ENCODE measurements at regions of chr16 and their contacts with region 1.

Region 1: GRCh38 chr16:58129097-58129936 is at the start of gene CFAP20:
- DNase-seq: peak; percentile 99
- H3K4me3 Mint-ChIP-seq: peak within 1 kb of the TSS; percentile 80
- H3K27ac Mint-ChIP-seq: peak within 1 kb of the TSS; percentile 73
- H3K4me1 Mint-ChIP-seq: peaks cover 33% of the 10 kb centered on the region
- H3K27me3 Mint-ChIP-seq: no peaks in the 10 kb centered on the region
- total RNA-seq, gene CFAP20: 62.7 and 63.2 TPM in 2 replicates

Region 2: DNA sequence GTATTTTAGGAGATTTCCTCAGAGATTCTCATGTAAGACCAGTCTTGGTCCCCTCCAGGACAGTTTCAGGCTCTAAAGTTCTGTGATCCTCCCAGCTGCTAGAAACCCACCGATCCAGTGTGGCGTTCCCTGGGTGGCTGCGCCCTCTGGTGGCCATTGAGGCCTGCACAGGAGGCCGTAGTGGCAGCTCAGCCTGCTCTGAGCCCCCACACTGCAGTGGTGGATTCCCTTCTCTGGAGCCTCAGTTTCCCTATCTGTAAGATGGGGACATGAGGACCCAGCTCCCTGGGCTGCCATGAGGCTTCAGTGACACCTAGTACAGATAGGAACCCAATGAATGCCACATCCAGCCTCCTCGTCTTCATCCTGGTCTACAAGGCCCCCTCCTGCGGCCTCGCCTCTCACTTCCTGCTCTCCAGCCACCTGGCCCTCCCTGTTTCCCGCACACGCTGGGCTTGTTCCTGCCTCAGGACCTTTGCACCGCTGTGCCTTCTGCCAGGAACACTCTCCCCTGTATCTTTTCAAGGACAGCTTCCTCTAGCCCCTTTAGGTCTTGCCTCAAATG is 609.4 kb before region 1 on chr16:
- intact Hi-C with region 1: no loop called
- DNase-seq: peak; percentile 94
- H3K4me3 Mint-ChIP-seq: no peak overlapping the region
- H3K27ac Mint-ChIP-seq: no peak overlapping the region
- H3K4me1 Mint-ChIP-seq: peaks cover 7% of the 10 kb centered on the region
- H3K27me3 Mint-ChIP-seq: no peaks in the 10 kb centered on the region

Region 3: DNA sequence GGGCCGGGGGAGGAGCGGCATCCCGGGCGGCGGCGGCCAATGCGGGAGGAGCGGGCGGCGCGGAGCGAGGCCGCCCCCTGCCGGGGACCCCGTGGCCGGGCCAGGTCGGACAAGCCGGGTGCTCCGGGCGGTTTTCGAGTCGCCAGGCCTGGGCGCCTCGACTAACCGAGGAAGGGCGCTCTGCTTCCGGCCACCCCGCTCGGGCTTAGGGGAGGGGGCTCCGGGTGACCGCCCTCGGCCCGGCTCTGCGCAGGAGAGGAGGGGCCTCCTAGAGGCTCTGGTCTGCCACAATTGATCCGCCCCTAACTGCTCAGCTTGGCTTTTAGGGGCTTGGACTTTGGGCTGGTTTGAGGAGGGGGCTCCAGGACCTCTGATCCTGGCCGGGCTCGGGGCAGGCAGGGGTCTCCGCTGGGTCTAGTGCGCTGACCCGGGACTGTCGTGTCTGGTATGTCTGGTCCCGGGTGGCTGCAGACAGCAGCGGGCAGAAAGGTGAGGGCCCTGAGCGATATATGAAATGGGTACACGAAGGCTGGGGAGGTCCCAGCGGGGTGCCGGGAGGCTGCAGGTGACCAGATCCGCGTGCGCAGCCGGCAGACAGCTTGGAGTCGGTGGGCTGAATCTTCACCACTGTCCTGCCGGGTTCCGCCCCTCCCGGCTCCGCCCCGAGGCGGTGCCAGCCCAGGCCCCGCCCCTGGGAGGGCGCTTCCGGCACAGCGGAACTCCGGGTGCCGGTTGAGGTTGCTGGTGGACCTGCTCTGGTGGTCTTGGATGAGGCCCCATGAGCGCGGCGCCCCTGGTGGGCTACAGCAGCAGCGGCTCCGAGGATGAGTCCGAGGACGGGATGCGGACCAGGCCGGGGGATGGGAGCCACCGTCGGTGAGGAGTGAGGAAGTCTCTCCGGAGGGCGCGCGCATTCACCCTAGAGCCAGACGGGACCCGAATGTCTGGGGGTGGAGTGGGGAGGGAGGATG is 128.3 kb before region 1 on chr16 and contains the start of gene USB1:
- intact Hi-C with region 1: loop called (anchors 2 kb)
- DNase-seq: peak; percentile 97
- H3K4me3 Mint-ChIP-seq: peak within 1 kb of the TSS; percentile 96
- H3K27ac Mint-ChIP-seq: peak within 1 kb of the TSS; percentile 89
- H3K4me1 Mint-ChIP-seq: peaks cover 34% of the 10 kb centered on the region
- H3K27me3 Mint-ChIP-seq: no peaks in the 10 kb centered on the region
- total RNA-seq, gene USB1: 50.9 and 54.4 TPM in 2 replicates

Region 4: GRCh38 chr16:58025351-58026138 is 103.8 kb before region 1 on chr16 and contains the start of gene MMP15:
- intact Hi-C with region 1: loop called (anchors 1 kb)
- DNase-seq: peak; percentile 89
- H3K4me3 Mint-ChIP-seq: peak within 1 kb of the TSS; percentile 88
- H3K27ac Mint-ChIP-seq: peak within 1 kb of the TSS; percentile 70
- H3K4me1 Mint-ChIP-seq: peaks cover 12% of the 10 kb centered on the region
- H3K27me3 Mint-ChIP-seq: peaks cover 26% of the 10 kb centered on the region
- total RNA-seq, gene MMP15: 0.89 and 1.1 TPM in 2 replicates

Region 5: GRCh38 chr16:58198022-58198683 is 68.8 kb after region 1 on chr16 and contains the start of gene CSNK2A2:
- intact Hi-C with region 1: loop called (anchors 1 kb)
- DNase-seq: peak; percentile 91
- H3K4me3 Mint-ChIP-seq: peak within 1 kb of the TSS; percentile 95
- H3K27ac Mint-ChIP-seq: peak within 1 kb of the TSS; percentile 88
- H3K4me1 Mint-ChIP-seq: peaks cover 34% of the 10 kb centered on the region
- H3K27me3 Mint-ChIP-seq: peaks cover 28% of the 10 kb centered on the region
- total RNA-seq, gene CSNK2A2: 92.0 and 96.7 TPM in 2 replicates

Region 6: DNA sequence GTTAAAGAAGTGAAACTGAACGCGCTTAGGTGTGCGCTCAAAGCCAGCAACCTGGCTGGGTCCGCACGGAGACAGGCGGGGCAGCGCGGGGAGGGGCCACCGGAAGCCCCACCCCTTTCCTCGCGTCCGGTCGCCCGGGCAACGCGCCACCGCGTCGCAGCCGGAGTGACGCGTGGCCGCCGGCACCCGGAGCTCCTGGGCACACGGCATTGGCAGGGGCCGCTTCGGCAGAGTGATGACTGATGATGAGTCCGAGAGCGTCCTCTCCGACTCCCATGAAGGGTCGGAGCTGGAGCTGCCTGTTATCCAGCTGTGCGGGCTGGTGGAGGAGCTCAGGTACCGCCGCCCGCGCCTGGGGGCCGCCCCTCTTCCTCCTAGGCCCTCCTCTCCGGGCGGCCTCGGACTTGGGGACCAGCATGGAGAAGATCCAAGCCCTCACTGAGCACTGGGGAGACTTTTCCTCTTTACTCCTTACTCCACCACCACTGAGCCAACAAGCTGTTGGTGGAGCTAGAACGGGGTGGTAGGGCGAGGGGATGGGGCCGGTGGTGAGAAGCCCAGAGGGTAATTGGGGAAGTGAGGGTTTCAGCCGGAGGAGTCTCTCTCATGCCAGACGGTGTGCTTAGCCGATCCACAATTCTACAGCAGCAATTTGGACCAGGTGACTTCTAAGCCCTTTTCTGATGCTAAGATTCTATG is 120.6 kb after region 1 on chr16:
- intact Hi-C with region 1: loop called (anchors 5 kb)
- DNase-seq: peak; percentile 96
- H3K4me3 Mint-ChIP-seq: peak overlapping the region; percentile 90
- H3K27ac Mint-ChIP-seq: peak overlapping the region; percentile 80
- H3K4me1 Mint-ChIP-seq: peaks cover 8% of the 10 kb centered on the region
- H3K27me3 Mint-ChIP-seq: peaks cover 13% of the 10 kb centered on the region

Region 7: DNA sequence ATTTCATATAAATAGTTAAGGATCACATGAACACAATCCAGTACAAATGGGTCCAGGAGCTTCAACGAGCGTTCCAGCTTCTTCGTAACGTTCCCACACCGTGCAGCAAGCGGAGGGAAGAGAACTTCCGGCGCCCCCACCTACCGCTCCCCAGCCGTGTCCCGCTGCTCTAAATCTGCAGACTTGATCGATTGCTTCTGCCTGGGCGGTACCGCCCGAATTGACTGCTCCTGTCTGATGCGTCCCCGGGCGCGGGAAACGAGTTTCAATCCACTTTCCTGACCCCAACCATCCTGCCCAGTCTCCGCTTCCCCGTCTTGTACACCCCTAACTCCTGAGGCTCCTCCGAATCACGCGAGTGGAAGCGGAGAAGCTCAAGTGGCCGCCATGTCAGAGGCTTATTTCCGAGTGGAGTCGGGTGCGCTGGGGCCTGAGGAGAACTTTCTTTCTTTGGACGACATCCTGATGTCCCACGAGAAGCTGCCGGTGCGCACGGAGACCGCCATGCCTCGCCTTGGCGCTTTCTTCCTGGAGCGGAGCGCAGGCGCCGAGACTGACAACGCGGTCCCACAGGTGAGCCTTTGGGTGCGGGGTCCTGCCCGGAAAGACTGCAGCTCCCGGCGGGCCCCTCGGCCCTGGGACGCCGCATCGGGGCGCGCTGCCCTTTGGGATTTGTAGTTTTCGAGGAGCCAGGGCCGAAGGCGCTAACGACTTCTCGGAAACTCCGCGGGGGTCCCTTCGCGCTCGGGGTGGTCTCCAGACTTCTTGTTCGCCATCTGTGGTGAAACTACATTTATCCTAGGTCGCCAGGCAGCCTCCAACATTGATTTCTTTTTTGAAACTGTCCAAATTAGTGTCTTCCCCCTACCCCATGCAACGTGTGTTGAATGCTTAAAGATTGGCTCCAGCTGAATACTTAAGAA is 263.2 kb after region 1 on chr16 and contains the start of gene GINS3:
- intact Hi-C with region 1: loop called (anchors 1 kb)
- DNase-seq: peak; percentile 96
- H3K4me3 Mint-ChIP-seq: peak within 1 kb of the TSS; percentile 98
- H3K27ac Mint-ChIP-seq: peak within 1 kb of the TSS; percentile 96
- H3K4me1 Mint-ChIP-seq: peaks cover 17% of the 10 kb centered on the region
- H3K27me3 Mint-ChIP-seq: peaks cover 16% of the 10 kb centered on the region
- total RNA-seq, gene GINS3: 24.1 and 25.0 TPM in 2 replicates

Region 8: GRCh38 chr16:58733671-58734458 is 604.5 kb after region 1 on chr16 and contains the start of gene GOT2:
- intact Hi-C with region 1: loop called (anchors 10 kb)
- DNase-seq: peak; percentile 95
- H3K4me3 Mint-ChIP-seq: peak within 1 kb of the TSS; percentile 93
- H3K27ac Mint-ChIP-seq: peak within 1 kb of the TSS; percentile 98
- H3K4me1 Mint-ChIP-seq: peaks cover 17% of the 10 kb centered on the region
- H3K27me3 Mint-ChIP-seq: peaks cover 2% of the 10 kb centered on the region
- total RNA-seq, gene GOT2: 141 and 144 TPM in 2 replicates